A673 (cell line): ENCODE measurements at regions of chr4 and their contacts with region 1.

Region 1: DNA sequence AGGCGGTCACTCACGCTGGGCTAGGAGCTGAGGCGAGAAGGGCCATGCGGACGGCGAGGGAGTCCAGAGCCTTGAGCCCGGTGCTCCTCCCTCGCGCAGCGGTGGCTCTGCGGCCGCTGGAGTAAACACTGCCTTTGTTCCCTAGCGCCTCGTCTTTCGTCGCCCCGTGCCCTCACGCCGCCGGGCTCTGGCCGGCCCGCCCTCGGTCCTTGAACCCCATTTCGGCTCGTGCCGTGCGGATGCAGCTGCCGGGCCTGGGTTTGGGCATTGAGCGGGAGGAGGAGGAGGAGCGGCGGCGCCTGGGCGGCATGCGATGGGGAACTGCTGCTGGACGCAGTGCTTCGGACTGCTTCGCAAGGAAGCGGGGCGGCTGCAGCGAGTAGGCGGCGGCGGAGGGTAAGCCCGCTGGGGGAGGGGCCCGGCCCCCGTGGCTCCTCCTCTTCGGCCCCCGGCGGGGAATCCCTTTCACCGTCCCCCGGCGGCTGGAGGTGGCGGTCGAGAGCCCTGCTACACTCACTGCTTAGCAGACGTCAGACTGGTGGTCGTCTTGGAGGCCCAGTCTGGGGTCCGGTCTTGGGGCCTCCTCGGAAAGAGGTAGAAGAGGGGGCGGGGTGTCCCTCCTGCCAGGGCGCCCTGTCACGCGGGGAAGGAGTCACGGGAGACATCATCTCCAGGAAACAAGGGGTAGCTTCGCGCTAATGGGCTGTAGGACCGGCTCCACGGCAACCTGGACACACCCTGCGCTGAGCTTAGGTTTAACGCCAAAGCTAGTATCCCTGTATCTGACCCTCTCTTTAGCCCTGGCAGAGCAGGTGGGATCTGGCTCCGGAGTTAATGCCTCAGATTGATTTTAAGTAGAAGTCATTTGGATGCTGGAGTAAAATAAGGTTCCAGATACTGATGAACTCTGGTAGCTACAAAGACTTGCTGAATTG is at the start of gene AP1AR:
- DNase-seq: peak; percentile 91
- H3K4me3 ChIP-seq: peak within 1 kb of the TSS; percentile 96
- H3K27ac ChIP-seq: peak within 1 kb of the TSS; percentile 98
- H3K4me1 ChIP-seq: peaks cover 11% of the 10 kb centered on the region
- H3K27me3 ChIP-seq: no peaks in the 10 kb centered on the region
- CTCF ChIP-seq: peak; percentile 44; the same call in 1 of the 2 replicates
- total RNA-seq, gene AP1AR: 24.9 and 30.0 TPM in 2 replicates

Region 2: GRCh38 chr4:112015960-112016359 is 216.1 kb before region 1 on chr4:
- CTCF ChIA-PET with region 1: no interaction called
- POLR2A ChIA-PET with region 1: no interaction called
- intact Hi-C with region 1: no loop called
- DNase-seq: no peak
- H3K4me3 ChIP-seq: no peak overlapping the region
- H3K27ac ChIP-seq: no peak overlapping the region
- H3K4me1 ChIP-seq: no peaks in the 10 kb centered on the region
- H3K27me3 ChIP-seq: peaks cover 7% of the 10 kb centered on the region
- CTCF ChIP-seq: no peak

Region 3: DNA sequence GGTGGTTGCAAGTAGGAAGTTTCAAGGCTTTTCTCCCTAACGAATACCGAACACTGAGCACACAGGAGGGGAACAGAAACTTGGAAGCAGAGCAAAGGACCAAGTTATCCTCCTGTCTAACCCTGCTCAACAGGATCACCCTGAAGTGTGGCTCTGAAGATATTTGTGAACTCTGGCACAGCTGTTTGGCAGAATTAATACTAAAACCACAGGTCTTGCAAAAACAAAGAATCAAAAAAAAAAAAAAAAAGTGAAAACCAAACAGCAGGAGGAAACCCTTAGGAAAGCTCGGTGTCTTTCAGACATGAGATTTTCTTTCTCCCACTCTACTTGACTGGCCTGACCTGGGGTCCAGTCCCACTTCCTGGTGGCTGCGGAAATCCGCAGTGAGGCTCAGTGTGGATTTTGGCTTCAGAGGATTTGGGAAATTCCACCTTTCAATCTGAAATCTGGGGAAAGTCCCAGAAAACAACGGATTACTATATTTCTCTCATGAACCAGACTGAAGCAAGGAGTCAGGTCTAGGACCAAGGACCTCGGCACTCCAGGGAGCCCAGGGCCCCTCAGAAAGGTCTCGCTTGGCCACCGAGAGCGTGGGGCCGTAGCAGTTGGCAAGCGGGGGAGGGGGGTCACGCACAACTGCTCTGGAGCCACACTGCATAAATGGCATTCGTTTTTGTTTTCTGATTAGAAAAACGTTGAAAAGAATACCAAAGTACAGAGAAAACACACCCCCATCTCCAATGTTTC is 52.8 kb after region 1 on chr4:
- CTCF ChIA-PET with region 1: no interaction called
- POLR2A ChIA-PET with region 1: no interaction called
- intact Hi-C with region 1: loop called (anchors 5 kb)
- DNase-seq: peak; percentile 12
- H3K4me3 ChIP-seq: peak overlapping the region; percentile 80
- H3K27ac ChIP-seq: peak overlapping the region; percentile 78
- H3K4me1 ChIP-seq: peaks cover 13% of the 10 kb centered on the region
- H3K27me3 ChIP-seq: no peaks in the 10 kb centered on the region
- CTCF ChIP-seq: no peak